ENCODE measurements at regions of chr11 and their contacts with region 1.

Region 1: GRCh38 chr11:119196833-119197483 is 9.2 kb upstream of the CBL start:
- DNase-seq: no peak
- ATAC-seq: peak; percentile 90 to 92

Region 2: GRCh38 chr11:119144825-119145486 is 52.0 kb before region 1 on chr11:
- intact Hi-C with region 1: loop called (anchors 2 to 5 kb)
- DNase-seq: peak; percentile 68
- ATAC-seq: peak; percentile 75 to 85

Region 3: DNA sequence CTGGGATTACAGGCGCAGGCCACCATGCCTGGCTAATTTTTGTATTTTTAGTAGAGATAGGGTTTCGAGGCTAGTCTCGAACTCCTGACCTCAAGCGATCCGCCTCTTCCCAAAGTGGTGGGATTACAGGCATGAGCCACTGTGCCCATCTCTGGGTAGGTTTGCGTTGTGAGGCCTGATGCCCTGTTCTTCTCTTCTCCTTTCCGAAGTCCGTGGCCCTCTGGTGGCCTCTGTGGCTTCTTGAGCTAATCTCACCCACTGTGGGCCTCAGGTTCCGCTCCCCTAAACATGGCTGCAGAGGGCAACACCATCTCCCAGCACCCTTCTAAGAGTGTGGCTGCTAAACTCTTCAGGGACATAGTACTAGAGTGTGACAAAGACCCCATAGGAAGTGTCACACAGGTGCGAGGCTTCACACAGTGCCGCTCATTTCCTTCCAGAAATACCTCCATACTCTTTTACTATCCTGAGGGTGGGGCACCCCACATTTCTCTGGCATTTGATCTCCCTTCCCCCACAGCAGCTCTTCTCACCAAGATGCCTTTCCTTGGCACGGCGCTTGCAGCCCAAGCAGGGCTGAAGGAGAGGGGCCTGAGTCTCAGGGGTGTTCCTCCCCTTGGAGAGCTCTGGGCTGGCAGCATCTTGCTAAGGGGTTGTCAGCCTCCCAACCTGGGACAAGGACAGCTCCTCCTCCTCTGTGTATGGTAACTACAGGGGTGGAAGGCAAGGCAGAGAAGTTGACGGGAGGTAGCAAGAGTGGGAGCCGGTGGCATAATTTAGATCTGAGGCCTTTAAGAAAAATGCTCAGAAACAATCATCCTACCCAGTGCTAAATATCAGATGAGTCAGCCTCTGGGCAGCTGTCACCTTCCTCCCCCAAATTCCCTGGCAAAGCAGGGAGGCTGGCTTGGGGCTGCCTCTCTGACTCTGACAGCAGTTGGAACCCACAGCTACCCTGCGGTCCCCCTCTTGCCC is 219.9 kb after region 1 on chr11:
- intact Hi-C with region 1: no loop called
- DNase-seq: no peak
- ATAC-seq: peak in 1 of 2 donors; percentile 78